Heart left ventricle (tissue), 16 donors: ENCODE measurements at regions of chr9 and their contacts with region 1.

Region 1: DNA sequence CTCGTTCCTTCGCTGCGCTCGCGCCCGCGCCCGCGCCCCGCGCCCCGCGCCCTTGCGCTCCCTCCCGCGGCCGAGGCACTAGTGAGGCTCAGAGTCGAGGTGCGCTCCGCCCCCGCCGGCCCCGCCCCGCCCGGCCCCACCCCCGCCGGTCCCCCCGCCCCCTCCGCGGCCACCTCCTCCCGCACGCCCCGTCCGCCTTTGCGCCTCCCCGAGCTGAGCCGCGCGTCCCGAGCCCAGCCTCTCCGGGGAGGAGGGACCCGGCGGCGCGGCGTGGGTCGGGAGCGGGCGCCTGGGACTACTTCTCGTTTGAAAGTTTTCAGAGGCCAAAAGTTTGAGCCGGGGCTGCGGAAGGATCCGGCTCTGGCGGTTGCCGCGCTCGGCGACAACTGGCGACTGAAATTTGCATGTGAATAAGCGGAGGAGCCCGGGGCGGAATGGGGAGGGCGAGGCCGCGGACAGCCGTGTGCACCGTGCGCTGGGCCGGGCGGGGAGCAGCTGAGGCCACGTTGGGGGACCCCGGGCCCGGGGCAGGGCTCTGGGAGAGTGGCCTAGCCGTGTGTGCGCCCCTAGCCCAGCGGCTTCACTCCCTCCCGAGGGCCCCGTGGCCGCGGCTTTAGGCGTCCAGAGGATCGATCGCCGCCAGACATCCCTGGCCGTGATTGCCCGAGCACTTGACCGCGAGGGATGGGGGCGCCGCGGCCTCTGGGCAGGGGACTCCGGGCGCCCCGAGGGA is at the start of gene NOTCH1:
- DNase-seq: peak; percentile 94 to 97 (median 96)
- ATAC-seq: peak; percentile 64 to 86 (median 85)
- H3K4me3 ChIP-seq: peak within 1 kb of the TSS; percentile 66 to 100 (median 92)
- H3K27ac ChIP-seq: peak within 1 kb of the TSS; percentile 94 to 99 (median 98)
- H3K4me1 ChIP-seq: peaks cover 12 to 68% (median 45%) of the 10 kb centered on the region in 12 donors
- H3K27me3 ChIP-seq: no peaks in the 10 kb centered on the region
- CTCF ChIP-seq: peak in 5 of 12 donors; percentile 13 to 39 (median 20)
- POLR2A ChIP-seq: peak in 1 of 2 donors; percentile 72
- total RNA-seq, gene NOTCH1: 12.1 to 47.3 (median 22.1) TPM

Region 2: GRCh38 chr9:136493567-136493971 is 52.6 kb before region 1 on chr9:
- intact Hi-C with region 1: loop called in 9 of 10 experiments (anchors 5 to 10 kb)
- DNase-seq: peak in 1 of 5 donors; percentile 52
- ATAC-seq: peak in 2 of 4 donors; percentile 4 to 10
- H3K4me3 ChIP-seq: no peak overlapping the region
- H3K27ac ChIP-seq: peak overlapping the region in 2 of 12 donors; percentile 18 to 33
- H3K4me1 ChIP-seq: peaks cover 0 to 29% (median 3%) of the 10 kb centered on the region in 12 donors
- H3K27me3 ChIP-seq: no peaks in the 10 kb centered on the region
- CTCF ChIP-seq: no peak
- POLR2A ChIP-seq: no peak

Region 3: GRCh38 chr9:136564379-136564988 is 18.4 kb after region 1 on chr9:
- intact Hi-C with region 1: loop called in 2 of 10 experiments (anchors 1 to 2 kb)
- DNase-seq: peak; percentile 71 to 92 (median 87)
- ATAC-seq: peak; percentile 52 to 72 (median 65)
- H3K4me3 ChIP-seq: peak overlapping the region in 2 of 12 donors; percentile 5 to 14
- H3K27ac ChIP-seq: peak overlapping the region; percentile 44 to 93 (median 80)
- H3K4me1 ChIP-seq: peaks cover 30 to 75% (median 65%) of the 10 kb centered on the region in 12 donors
- H3K27me3 ChIP-seq: no peaks in the 10 kb centered on the region
- CTCF ChIP-seq: peak in 5 of 12 donors; percentile 14 to 40 (median 32)
- POLR2A ChIP-seq: no peak

Region 4: GRCh38 chr9:136605988-136606660 is 60.0 kb after region 1 on chr9:
- intact Hi-C with region 1: loop called in 1 of 10 experiments (anchors 5 kb)
- DNase-seq: peak in 3 of 5 donors; percentile 47 to 79 (median 52)
- ATAC-seq: peak; percentile 42 to 60 (median 48)
- H3K4me3 ChIP-seq: no peak overlapping the region
- H3K27ac ChIP-seq: peak overlapping the region in 7 of 12 donors; percentile 18 to 57 (median 40)
- H3K4me1 ChIP-seq: peaks cover 9 to 41% (median 25%) of the 10 kb centered on the region in 12 donors
- H3K27me3 ChIP-seq: no peaks in the 10 kb centered on the region
- CTCF ChIP-seq: no peak
- POLR2A ChIP-seq: no peak

Region 5: DNA sequence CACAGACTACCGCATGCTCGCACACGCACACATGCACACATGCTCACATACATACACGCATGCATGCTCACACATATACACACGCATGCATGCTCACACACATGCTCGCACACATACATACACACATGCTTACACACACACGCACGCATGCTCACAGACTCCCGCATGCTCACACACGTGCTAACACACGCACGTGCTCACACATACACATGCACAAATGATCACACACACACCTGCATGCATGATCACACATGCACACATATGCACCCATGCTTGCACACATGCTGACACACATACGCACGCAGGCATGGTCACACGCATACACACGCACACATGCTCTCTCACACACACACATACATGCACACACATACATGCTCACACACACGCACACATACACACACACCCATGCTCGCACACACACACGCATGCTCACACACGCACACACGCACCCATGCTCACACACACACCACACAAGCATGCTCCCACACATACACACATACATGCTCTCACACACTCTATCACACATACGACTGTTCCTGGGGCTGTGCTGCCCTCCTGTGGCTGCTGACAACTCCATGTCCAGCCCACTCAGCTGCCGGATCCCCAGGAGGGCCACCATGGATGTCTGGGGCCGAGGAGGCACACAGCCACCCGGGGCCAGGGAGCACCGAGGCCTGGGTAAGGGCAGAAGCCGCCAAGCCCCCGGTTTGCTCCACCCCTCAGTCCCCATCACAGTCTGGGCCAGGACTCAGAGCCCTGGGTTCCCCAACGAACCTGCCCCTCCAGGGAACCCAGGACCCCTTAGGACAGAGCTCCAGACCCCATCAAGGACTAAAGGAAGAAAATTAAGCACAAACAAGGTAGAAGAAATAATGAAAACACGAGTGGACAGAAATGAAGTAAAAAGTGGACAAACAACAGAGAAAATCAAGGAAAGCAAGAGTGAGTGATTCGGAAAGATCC is 85.2 kb after region 1 on chr9:
- intact Hi-C with region 1: loop called in 5 of 10 experiments (anchors 5 to 10 kb)
- DNase-seq: peak; percentile 79 to 92 (median 80)
- ATAC-seq: peak; percentile 80 to 96 (median 92)
- H3K4me3 ChIP-seq: no peak overlapping the region
- H3K27ac ChIP-seq: no peak overlapping the region
- H3K4me1 ChIP-seq: peaks cover 0 to 28% (median 12%) of the 10 kb centered on the region in 12 donors
- H3K27me3 ChIP-seq: peaks cover 0 to 3% (median 0%) of the 10 kb centered on the region in 9 donors
- CTCF ChIP-seq: peak; percentile 71 to 89 (median 82)
- POLR2A ChIP-seq: no peak

Region 6: GRCh38 chr9:136740971-136741882 is 195.1 kb after region 1 on chr9:
- intact Hi-C with region 1: no loop called
- DNase-seq: peak in 4 of 5 donors; percentile 62 to 77 (median 64)
- ATAC-seq: peak; percentile 62 to 77 (median 66)
- H3K4me3 ChIP-seq: peak overlapping the region in 10 of 12 donors; percentile 2 to 55 (median 18)
- H3K27ac ChIP-seq: peak overlapping the region in 6 of 12 donors; percentile 4 to 62 (median 36)
- H3K4me1 ChIP-seq: peaks cover 0 to 36% (median 15%) of the 10 kb centered on the region in 12 donors
- H3K27me3 ChIP-seq: peaks cover 0 to 19% (median 0%) of the 10 kb centered on the region in 9 donors
- CTCF ChIP-seq: no peak
- POLR2A ChIP-seq: no peak